ENCODE measurements at regions of chr19 and their contacts with region 1.

Region 1: DNA sequence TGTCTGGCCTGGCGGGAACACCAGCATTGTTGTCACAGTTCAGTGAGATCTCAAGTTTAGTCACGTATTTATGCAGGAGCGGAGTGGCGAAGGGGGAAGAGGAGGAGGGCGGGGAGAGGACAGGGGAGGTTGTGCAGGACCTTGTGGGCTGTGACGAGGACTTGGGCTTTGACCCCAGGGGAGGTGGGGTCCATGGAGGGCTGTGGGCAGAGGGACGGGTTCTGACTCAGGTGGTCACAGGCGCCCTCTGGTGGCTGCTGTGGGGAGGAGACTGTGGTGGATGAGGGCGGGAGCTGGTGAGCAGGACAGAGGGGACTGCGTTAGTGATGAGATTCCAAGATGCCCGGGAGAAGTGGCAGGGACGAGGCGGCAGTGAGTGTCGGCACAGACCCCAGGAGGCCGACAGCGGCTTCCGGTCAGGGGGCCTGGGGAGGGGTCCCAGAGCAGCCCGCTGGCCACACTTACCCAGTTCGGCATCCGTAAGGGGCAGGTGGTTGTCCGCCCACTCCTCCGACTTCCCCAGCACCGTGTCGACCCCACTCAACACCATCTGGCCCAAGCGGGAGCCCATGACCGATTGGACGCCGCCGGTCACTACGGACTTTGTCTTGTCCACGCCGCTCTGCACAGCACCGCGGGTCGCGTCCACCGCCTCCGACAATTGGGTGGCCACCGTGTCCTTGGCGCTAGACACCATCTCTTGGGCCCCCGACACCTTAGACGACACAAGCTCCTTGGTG is 15.7 kb downstream of the PLIN3 start:
- DNase-seq: peak; percentile 81
- H3K4me3 Mint-ChIP-seq: no peak overlapping the region
- H3K27ac Mint-ChIP-seq: peak overlapping the region; percentile 38
- H3K4me1 Mint-ChIP-seq: peaks cover 2% of the 10 kb centered on the region
- H3K27me3 Mint-ChIP-seq: no peaks in the 10 kb centered on the region

Region 2: DNA sequence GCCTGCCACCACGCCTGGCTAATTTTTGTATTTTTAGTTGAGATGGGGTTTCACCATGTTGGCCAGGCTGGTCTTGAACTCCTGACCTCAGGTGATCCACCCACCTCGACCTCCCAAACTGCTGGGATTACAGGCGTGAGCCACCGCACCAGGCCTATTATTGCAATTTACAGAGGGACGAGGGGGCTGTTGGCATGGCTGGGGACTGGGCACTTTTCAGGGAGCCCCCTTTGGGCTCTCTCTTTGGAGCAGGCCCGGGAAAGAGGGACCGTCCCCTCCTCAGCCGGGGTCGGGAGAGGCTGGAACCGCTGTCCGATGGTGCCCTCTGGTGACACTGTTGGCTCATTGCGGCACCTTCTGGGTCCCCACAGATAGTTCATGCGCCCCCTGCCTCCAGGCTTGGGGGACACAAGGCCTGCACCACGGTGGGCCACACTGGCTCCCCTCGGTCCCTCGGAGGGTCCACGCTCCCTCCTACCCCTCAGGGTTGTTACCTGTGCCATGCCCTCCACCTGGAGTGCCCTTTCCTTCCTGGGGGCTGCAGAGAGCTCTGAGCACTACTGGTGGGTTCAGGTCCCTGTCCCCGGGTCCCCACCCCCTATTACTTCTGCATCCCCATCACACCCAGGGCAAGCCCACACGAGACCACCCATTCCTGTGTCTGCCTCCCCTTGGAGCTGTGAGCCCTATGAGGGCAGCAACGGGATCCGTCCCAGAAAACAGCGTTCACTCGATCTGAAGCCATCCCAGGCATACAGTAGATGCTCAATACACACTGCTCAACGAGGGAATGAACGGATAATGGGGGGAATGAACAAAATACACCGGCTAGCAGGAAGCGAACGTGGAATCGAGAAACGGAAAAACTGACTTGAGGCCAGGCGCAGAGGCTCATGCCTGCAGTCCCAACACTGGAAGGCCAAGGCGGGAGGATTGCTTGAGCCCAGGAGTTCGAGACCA is 47.7 kb before region 1 on chr19:
- CTCF ChIA-PET with region 1: interaction called, 395 read pairs
- POLR2A ChIA-PET with region 1: interaction called, 6 read pairs
- intact Hi-C with region 1: loop called (anchors 1 kb)
- DNase-seq: peak; percentile 73
- H3K4me3 Mint-ChIP-seq: no peak overlapping the region
- H3K27ac Mint-ChIP-seq: no peak overlapping the region
- H3K4me1 Mint-ChIP-seq: no peaks in the 10 kb centered on the region
- H3K27me3 Mint-ChIP-seq: no peaks in the 10 kb centered on the region

Region 3: DNA sequence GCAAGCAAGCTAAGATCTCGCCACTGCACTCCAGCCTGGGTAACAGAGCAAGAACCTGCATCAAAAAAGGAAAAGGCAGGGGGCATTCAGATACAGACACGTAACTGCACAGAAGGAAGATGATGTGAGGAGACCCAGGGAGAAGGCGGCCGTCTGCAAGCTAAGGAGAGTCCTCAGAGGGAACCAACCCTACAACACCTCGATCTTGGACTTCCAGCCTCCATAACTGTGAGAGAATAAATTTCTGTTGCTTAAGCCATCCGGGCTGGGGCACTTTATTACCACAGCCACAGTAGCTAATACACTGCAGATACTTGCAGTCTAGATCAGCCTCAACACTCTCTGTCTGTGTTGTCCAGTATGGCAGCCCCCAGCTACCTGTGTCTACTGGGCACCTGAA is 28.1 kb before region 1 on chr19:
- CTCF ChIA-PET with region 1: interaction called, 10 read pairs
- POLR2A ChIA-PET with region 1: no interaction called
- intact Hi-C with region 1: no loop called
- DNase-seq: no peak
- H3K4me3 Mint-ChIP-seq: no peak overlapping the region
- H3K27ac Mint-ChIP-seq: no peak overlapping the region
- H3K4me1 Mint-ChIP-seq: peaks cover 2% of the 10 kb centered on the region
- H3K27me3 Mint-ChIP-seq: no peaks in the 10 kb centered on the region

Region 4: DNA sequence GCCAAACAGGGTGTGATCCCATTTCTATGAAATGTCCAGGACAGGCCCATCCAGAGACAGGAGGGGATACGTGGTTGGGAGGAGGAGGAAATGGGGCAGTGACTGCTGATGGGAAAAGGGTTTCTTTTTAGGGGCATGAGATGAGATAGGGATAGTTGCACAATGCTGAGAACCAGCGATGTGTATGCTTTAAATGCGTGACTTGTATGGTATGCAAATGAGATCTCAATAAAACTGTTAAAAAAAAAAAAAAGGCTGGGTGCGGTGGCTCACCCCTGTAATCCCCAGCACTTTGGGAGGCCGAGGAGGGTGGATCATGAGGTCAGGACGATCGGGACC is 10.4 kb before region 1 on chr19:
- CTCF ChIA-PET with region 1: interaction called, 21 read pairs
- POLR2A ChIA-PET with region 1: no interaction called
- intact Hi-C with region 1: no loop called
- DNase-seq: no peak
- H3K4me3 Mint-ChIP-seq: peak overlapping the region; percentile 22
- H3K27ac Mint-ChIP-seq: peak overlapping the region; percentile 85
- H3K4me1 Mint-ChIP-seq: peaks cover 23% of the 10 kb centered on the region
- H3K27me3 Mint-ChIP-seq: no peaks in the 10 kb centered on the region

Region 5: DNA sequence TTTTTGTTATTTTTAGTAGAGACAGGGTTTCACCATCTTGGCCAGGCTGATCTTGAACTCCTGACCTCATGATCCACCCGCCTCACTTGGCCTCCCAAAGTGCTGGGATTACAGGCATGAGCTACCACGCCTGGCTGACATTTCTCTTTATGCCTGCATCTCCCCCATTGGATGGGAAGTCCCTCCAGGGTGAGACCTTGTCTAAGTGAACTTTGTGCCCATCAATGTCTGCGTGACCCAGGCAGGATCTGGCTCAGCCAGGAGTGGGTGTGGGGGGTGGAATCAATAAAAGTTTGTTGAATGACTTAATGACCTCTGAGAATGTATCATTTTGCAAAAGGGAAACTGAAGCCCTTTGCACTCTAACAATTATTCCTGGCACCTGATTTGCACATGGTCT is 52.8 kb after region 1 on chr19:
- CTCF ChIA-PET with region 1: no interaction called
- POLR2A ChIA-PET with region 1: no interaction called
- intact Hi-C with region 1: no loop called
- DNase-seq: no peak
- H3K4me3 Mint-ChIP-seq: no peak overlapping the region
- H3K27ac Mint-ChIP-seq: no peak overlapping the region
- H3K4me1 Mint-ChIP-seq: peaks cover 7% of the 10 kb centered on the region
- H3K27me3 Mint-ChIP-seq: no peaks in the 10 kb centered on the region

Measured in activated CD4-positive, alpha-beta memory T cell treated with anti-CD3 and anti-CD28 coated beads for 36 hours (primary cell).